Endothelial cell of umbilical vein (primary cell): ENCODE measurements at regions of chr9 and their contacts with region 1.

Region 1: GRCh38 chr9:71179183-71179582 is 57.8 kb upstream of the TRPM3 start:
- DNase-seq: no peak
- H3K4me3 ChIP-seq: no peak overlapping the region
- H3K27ac ChIP-seq: no peak overlapping the region
- H3K4me1 ChIP-seq: no peaks in the 10 kb centered on the region
- H3K27me3 ChIP-seq: no peaks in the 10 kb centered on the region
- CTCF ChIP-seq: no peak
- POLR2A ChIP-seq: no peak

Region 2: GRCh38 chr9:71072587-71072986 is 106.6 kb before region 1 on chr9:
- CTCF ChIA-PET with region 1: no interaction called
- POLR2A ChIA-PET with region 1: no interaction called
- dilution Hi-C with region 1: no loop called
- intact Hi-C with region 1: loop called (anchors 5 kb)
- DNase-seq: no peak
- H3K4me3 ChIP-seq: no peak overlapping the region
- H3K27ac ChIP-seq: no peak overlapping the region
- H3K4me1 ChIP-seq: no peaks in the 10 kb centered on the region
- H3K27me3 ChIP-seq: no peaks in the 10 kb centered on the region
- CTCF ChIP-seq: no peak
- POLR2A ChIP-seq: no peak

Region 3: GRCh38 chr9:71168418-71168817 is 10.8 kb before region 1 on chr9:
- CTCF ChIA-PET with region 1: no interaction called
- POLR2A ChIA-PET with region 1: no interaction called
- dilution Hi-C with region 1: no loop called
- intact Hi-C with region 1: loop called (anchors 1 kb)
- DNase-seq: no peak
- H3K4me3 ChIP-seq: no peak overlapping the region
- H3K27ac ChIP-seq: no peak overlapping the region
- H3K4me1 ChIP-seq: no peaks in the 10 kb centered on the region
- H3K27me3 ChIP-seq: peaks cover 0 to 3% of the 10 kb centered on the region in 2 experiments
- CTCF ChIP-seq: no peak
- POLR2A ChIP-seq: no peak

Region 4: GRCh38 chr9:71233646-71234045 is 54.5 kb after region 1 on chr9:
- CTCF ChIA-PET with region 1: no interaction called
- POLR2A ChIA-PET with region 1: no interaction called
- dilution Hi-C with region 1: no loop called
- intact Hi-C with region 1: no loop called
- DNase-seq: no peak
- H3K4me3 ChIP-seq: no peak overlapping the region
- H3K27ac ChIP-seq: no peak overlapping the region
- H3K4me1 ChIP-seq: no peaks in the 10 kb centered on the region
- H3K27me3 ChIP-seq: peaks cover 0 to 3% of the 10 kb centered on the region in 2 experiments
- CTCF ChIP-seq: no peak
- POLR2A ChIP-seq: no peak